Activated naive CD8-positive, alpha-beta T cell treated with anti-CD3 and anti-CD28 coated beads, Interleukin-2, amount 10 ng/mL, durations not matched to agents 7 days and 5 days (primary cell): ENCODE measurements at regions of chr11 and their contacts with region 1.

Region 1: GRCh38 chr11:62601394-62602140 is at the start of gene MTA2:
- DNase-seq: peak; percentile 99
- ATAC-seq: peak; percentile 89
- H3K4me3 Mint-ChIP-seq: peak within 1 kb of the TSS; percentile 87
- H3K27ac Mint-ChIP-seq: peak within 1 kb of the TSS; percentile 88
- H3K4me1 Mint-ChIP-seq: peaks cover 34% of the 10 kb centered on the region
- H3K27me3 Mint-ChIP-seq: no peaks in the 10 kb centered on the region
- total RNA-seq, gene MTA2: 231 to 233 TPM

Region 2: GRCh38 chr11:62542750-62543567 is 58.6 kb before region 1 on chr11:
- POLR2A ChIA-PET with region 1: no interaction called
- DNase-seq: peak; percentile 88
- ATAC-seq: peak; percentile 43
- H3K4me3 Mint-ChIP-seq: peak overlapping the region; percentile 73
- H3K27ac Mint-ChIP-seq: peak overlapping the region; percentile 83
- H3K4me1 Mint-ChIP-seq: peaks cover 52% of the 10 kb centered on the region
- H3K27me3 Mint-ChIP-seq: peaks cover 9% of the 10 kb centered on the region

Region 3: GRCh38 chr11:62612366-62613290 is 11.1 kb after region 1 on chr11 and contains the starts of genes EML3 and ROM1:
- POLR2A ChIA-PET with region 1: interaction called, 33 read pairs
- DNase-seq: peak; percentile 96
- ATAC-seq: peak; percentile 74
- H3K4me3 Mint-ChIP-seq: peak within 1 kb of the TSS; percentile 90
- H3K27ac Mint-ChIP-seq: peak within 1 kb of the TSS; percentile 93
- H3K4me1 Mint-ChIP-seq: peaks cover 39% of the 10 kb centered on the region
- H3K27me3 Mint-ChIP-seq: no peaks in the 10 kb centered on the region
- total RNA-seq, gene EML3: 183 to 185 TPM
- total RNA-seq, gene ROM1: 1.4 to 2.4 TPM

Region 4: GRCh38 chr11:62621567-62622470 is 20.3 kb after region 1 on chr11 and contains the start of gene B3GAT3:
- POLR2A ChIA-PET with region 1: interaction called, 24 read pairs
- DNase-seq: peak; percentile 94
- ATAC-seq: peak; percentile 87
- H3K4me3 Mint-ChIP-seq: peak within 1 kb of the TSS; percentile 93
- H3K27ac Mint-ChIP-seq: peak within 1 kb of the TSS; percentile 99
- H3K4me1 Mint-ChIP-seq: peaks cover 24% of the 10 kb centered on the region
- H3K27me3 Mint-ChIP-seq: no peaks in the 10 kb centered on the region
- total RNA-seq, gene B3GAT3: 76.1 to 87.0 TPM

Region 5: GRCh38 chr11:62645956-62646824 is 44.6 kb after region 1 on chr11 and contains the start of gene GANAB:
- POLR2A ChIA-PET with region 1: interaction called, 18 read pairs
- DNase-seq: peak; percentile 96
- ATAC-seq: peak; percentile 98
- H3K4me3 Mint-ChIP-seq: peak within 1 kb of the TSS; percentile 99
- H3K27ac Mint-ChIP-seq: peak within 1 kb of the TSS; percentile 96
- H3K4me1 Mint-ChIP-seq: peaks cover 24% of the 10 kb centered on the region
- H3K27me3 Mint-ChIP-seq: no peaks in the 10 kb centered on the region
- total RNA-seq, gene GANAB: 291 to 300 TPM

Region 6: GRCh38 chr11:62705880-62706849 is 104.6 kb after region 1 on chr11:
- POLR2A ChIA-PET with region 1: interaction called, 14 read pairs
- DNase-seq: peak; percentile 95
- ATAC-seq: peak; percentile 43
- H3K4me3 Mint-ChIP-seq: peak overlapping the region; percentile 91
- H3K27ac Mint-ChIP-seq: peak overlapping the region; percentile 73
- H3K4me1 Mint-ChIP-seq: peaks cover 39% of the 10 kb centered on the region
- H3K27me3 Mint-ChIP-seq: no peaks in the 10 kb centered on the region